ENCODE measurements at regions of chr15 and their contacts with region 1.

Region 1: DNA sequence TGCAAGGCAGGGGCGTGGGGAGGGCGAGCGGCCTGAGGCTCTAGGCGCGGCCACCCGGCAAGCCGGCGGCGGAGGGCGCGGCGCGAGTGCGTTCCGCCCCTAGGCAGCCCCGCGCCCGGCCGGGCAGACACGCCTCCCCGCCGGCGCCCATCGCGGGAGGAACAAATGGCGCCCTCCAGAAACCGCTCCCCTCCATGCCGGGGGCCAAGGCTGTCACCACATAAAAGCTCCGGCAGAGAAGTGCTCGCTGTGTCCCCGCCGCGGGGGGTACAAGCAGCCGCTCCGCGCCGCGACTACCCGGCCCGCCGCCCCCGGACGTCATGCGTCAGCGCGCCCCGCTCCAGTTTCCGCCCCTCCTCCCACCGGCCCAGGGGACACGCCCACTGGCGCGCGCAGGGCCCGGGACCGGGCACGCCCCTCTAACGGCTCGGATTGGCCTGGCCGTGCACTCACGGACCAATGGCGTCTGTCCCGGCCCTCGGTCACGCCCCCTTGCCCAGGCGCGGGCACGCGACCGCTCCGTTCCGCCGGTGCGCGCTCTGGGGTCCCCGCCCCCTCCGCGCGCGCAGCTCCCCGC is 391 bp upstream of the KLF13 start:
- DNase-seq: peak; percentile 98
- H3K4me3 ChIP-seq: peak overlapping the region; percentile 53 to 89 (median 62)
- H3K27ac ChIP-seq: peak overlapping the region; percentile 78
- H3K4me1 ChIP-seq: peaks cover 8% of the 10 kb centered on the region
- H3K27me3 ChIP-seq: peaks cover 0 to 2% of the 10 kb centered on the region in 2 experiments
- CTCF ChIP-seq: no peak
- POLR2A ChIP-seq: peak; percentile 68

Region 2: GRCh38 chr15:31163746-31164563 is 162.3 kb before region 1 on chr15:
- CTCF ChIA-PET with region 1: no interaction called
- POLR2A ChIA-PET with region 1: no interaction called
- dilution Hi-C with region 1: no loop called
- intact Hi-C with region 1: no loop called
- DNase-seq: no peak
- H3K4me3 ChIP-seq: no peak overlapping the region
- H3K27ac ChIP-seq: no peak overlapping the region
- H3K4me1 ChIP-seq: no peaks in the 10 kb centered on the region
- H3K27me3 ChIP-seq: peaks cover 0 to 1% of the 10 kb centered on the region in 2 experiments
- CTCF ChIP-seq: no peak
- POLR2A ChIP-seq: no peak

Region 3: DNA sequence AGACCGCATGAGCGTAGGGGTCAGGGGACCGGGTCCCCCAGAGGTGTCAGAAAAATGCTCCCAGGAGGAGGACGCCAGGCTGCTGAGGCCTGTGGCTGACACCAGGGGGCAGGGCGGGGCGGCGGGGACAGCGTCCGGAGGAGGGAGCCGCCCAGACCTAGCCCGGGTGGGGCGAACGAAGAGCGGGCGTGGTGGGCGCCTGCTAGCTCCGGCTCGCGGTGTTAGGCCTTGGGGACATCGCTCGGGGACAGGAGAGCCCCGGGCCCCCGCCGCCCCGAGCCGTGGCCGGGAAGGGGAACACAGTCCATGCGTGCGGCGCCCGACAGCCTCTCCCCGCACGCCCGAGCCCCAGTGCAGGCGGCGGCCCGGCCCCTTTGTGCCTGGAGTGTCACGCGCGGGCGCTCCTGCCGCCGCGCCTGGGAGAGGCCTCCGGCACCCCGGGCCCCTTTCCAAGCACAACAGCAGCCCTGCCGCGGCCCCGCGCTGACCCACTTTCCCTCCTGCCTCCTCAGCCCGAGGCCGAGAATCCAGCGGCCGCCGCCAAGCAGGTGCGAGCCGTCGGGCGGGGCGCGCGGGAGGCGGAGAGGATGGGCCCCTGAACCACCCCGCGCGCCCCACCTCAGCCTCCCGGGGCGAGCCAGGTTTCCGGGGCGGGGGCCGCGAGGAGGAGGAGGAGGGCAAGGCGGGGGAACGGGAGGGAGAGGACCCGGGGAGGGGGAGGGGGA is 110.6 kb before region 1 on chr15:
- CTCF ChIA-PET with region 1: interaction called, 10 read pairs
- POLR2A ChIA-PET with region 1: no interaction called
- dilution Hi-C with region 1: loop called (anchors 25 kb)
- intact Hi-C with region 1: loop called (anchors 1 kb)
- DNase-seq: peak; percentile 34
- H3K4me3 ChIP-seq: peak overlapping the region; percentile 30 to 45 (median 33)
- H3K27ac ChIP-seq: no peak overlapping the region
- H3K4me1 ChIP-seq: no peaks in the 10 kb centered on the region
- H3K27me3 ChIP-seq: peaks cover 7 to 8% of the 10 kb centered on the region in 2 experiments
- CTCF ChIP-seq: peak; percentile 73 to 90
- POLR2A ChIP-seq: no peak

Region 4: DNA sequence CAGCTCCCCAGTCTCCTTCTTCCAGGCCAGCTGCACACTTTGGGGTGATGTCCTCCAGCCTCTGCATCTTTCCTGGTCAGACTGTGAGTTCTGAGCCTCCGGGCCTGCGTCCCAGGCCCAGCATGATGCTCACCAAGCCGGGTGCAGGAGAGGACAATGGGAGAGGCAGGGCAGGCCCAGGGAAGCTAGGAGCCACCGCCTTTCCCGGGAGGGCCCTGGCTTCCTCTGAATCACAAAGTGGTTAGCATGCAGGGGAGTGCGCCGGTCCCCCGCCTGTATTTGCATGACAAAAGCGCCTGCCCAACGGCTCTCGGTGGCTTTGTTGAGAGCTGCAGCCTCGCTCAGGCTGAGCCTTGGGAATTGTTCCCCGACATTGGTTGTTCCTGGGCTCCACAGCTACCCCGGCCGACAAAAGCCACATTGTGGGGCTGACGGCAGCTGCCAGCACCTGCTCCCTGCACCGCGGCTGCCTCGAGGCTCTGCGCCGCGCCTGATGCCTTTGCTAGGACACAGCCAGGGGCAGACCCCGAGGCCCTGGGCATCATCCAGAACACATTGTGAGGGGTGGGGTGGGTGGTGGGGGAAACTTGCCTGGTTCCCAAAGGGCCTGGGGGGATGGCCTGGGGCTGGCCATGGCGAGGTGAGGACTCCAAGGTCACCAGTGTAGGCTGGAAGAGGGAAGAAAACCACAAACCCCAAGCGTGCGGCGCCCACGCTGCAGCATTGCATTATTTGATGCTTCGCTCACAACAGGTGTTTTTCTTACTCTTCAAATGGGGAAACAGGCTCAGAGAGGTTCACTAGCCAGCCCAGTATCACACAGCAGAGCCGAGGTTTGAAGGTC is 19.6 kb before region 1 on chr15:
- CTCF ChIA-PET with region 1: no interaction called
- POLR2A ChIA-PET with region 1: no interaction called
- dilution Hi-C with region 1: no loop called
- intact Hi-C with region 1: no loop called
- DNase-seq: no peak
- H3K4me3 ChIP-seq: no peak overlapping the region
- H3K27ac ChIP-seq: no peak overlapping the region
- H3K4me1 ChIP-seq: no peaks in the 10 kb centered on the region
- H3K27me3 ChIP-seq: no peaks in the 10 kb centered on the region
- CTCF ChIP-seq: no peak
- POLR2A ChIP-seq: no peak

Region 5: GRCh38 chr15:31342781-31343626 is 16.8 kb after region 1 on chr15:
- CTCF ChIA-PET with region 1: interaction called, 11 read pairs
- POLR2A ChIA-PET with region 1: no interaction called
- dilution Hi-C with region 1: no loop called
- intact Hi-C with region 1: loop called (anchors 1 kb)
- DNase-seq: peak; percentile 82
- H3K4me3 ChIP-seq: no peak overlapping the region
- H3K27ac ChIP-seq: peak overlapping the region; percentile 28
- H3K4me1 ChIP-seq: peaks cover 21% of the 10 kb centered on the region
- H3K27me3 ChIP-seq: no peaks in the 10 kb centered on the region
- CTCF ChIP-seq: peak in 1 of 2 donors; percentile 55
- POLR2A ChIP-seq: no peak

Region 6: GRCh38 chr15:31365655-31366127 is 39.4 kb after region 1 on chr15:
- CTCF ChIA-PET with region 1: no interaction called
- POLR2A ChIA-PET with region 1: no interaction called
- dilution Hi-C with region 1: no loop called
- intact Hi-C with region 1: loop called (anchors 5 kb)
- DNase-seq: no peak
- H3K4me3 ChIP-seq: no peak overlapping the region
- H3K27ac ChIP-seq: no peak overlapping the region
- H3K4me1 ChIP-seq: peaks cover 7% of the 10 kb centered on the region
- H3K27me3 ChIP-seq: no peaks in the 10 kb centered on the region
- CTCF ChIP-seq: peak in 1 of 2 donors; percentile 20
- POLR2A ChIP-seq: no peak

Region 7: DNA sequence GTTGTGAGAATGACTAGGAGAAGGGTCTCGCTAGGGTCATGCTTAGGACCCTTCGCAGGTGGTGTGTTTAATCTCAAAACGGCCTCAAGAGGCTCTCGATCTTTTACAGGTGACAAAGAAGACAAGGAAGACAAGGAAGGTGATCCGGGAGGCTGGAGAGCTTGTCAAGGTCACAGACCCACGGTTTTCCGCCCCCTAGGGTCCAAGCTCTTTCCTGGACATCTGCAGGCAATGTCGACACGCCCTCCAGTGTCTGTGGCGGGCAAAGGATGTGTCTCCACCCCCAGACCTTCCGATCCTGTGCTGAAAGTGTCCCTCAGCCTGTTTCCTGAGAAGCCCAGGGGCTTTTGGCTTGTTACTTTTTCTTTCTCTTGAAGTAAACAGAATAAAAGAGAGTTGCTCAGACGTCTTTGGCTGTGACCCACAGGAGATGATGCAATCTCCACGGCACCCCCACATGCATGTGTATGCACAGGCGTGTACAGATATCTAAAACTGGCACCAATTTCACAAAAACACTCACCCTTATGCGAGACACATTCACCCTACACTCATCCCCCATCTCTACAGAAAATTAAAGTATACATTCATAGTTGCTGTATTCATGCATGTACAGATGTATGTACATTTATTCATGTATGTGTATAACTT is 109.1 kb after region 1 on chr15:
- CTCF ChIA-PET with region 1: interaction called, 23 read pairs
- POLR2A ChIA-PET with region 1: no interaction called
- dilution Hi-C with region 1: no loop called
- intact Hi-C with region 1: loop called (anchors 1 kb)
- DNase-seq: peak; percentile 54
- H3K4me3 ChIP-seq: peak overlapping the region in 1 of 3 experiments; percentile 50
- H3K27ac ChIP-seq: peak overlapping the region; percentile 98
- H3K4me1 ChIP-seq: peaks cover 20% of the 10 kb centered on the region
- H3K27me3 ChIP-seq: no peaks in the 10 kb centered on the region
- CTCF ChIP-seq: peak; percentile 69 to 71
- POLR2A ChIP-seq: no peak

Region 8: DNA sequence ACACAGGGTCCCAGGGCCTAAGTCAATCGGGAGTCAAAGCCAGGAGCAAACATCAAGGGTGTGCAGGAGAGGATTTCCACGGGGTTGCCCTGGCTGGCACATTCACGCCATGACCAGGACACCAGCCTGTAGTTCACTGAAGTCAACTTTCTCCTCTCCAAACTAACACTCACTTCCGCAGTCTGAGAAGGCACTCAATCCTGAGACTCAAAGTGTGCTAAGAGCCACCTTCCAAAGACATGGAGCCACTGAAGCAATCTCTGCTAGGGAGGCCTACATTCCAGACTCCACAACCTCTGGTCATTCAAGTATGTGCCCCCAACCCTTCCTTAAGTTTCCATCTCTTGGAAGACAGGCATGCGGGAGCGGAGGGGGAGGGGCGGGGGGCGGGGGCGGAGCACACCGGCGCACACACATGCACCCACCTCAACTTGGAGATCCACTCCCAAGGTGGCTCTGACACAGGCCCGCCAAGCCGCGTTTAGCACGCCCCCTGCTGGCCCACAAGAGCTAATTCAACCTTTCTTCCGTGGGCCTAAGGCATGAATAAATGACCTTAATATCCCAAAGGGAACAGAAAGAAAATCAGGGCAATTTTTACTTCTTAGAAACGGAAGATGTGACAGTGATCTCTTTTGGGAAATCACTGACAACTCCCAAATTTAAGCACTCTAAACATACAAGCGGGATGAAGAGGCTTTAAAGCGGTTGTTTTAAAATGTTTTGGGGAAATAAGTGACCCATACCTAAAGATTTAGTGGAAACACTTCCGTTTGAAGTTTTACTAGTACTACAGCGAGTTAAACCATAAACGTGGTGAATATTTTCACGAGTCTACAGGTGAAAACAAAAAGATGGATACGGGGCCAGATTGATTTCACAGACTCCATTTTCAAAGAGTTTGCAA is 541.5 kb after region 1 on chr15:
- CTCF ChIA-PET with region 1: no interaction called
- POLR2A ChIA-PET with region 1: no interaction called
- dilution Hi-C with region 1: no loop called
- intact Hi-C with region 1: loop called (anchors 10 kb)
- DNase-seq: peak; percentile 48
- H3K4me3 ChIP-seq: no peak overlapping the region
- H3K27ac ChIP-seq: no peak overlapping the region
- H3K4me1 ChIP-seq: peaks cover 3% of the 10 kb centered on the region
- H3K27me3 ChIP-seq: peaks cover 8 to 9% of the 10 kb centered on the region in 2 experiments
- CTCF ChIP-seq: peak; percentile 71 to 80
- POLR2A ChIP-seq: no peak